Activated CD8-positive, alpha-beta T cell treated with anti-CD3 and anti-CD28 coated beads for 36 hours (primary cell): ENCODE measurements at regions of chr9 and their contacts with region 1.

Region 1: GRCh38 chr9:131270171-131271015 is 5.9 kb downstream of the FAM78A start:
- DNase-seq: peak; percentile 77
- ATAC-seq: peak; percentile 18
- H3K4me3 Mint-ChIP-seq: peak overlapping the region; percentile 90
- H3K27ac Mint-ChIP-seq: peak overlapping the region; percentile 99
- H3K4me1 Mint-ChIP-seq: peaks cover 44% of the 10 kb centered on the region
- H3K27me3 Mint-ChIP-seq: no peaks in the 10 kb centered on the region
- CTCF ChIP-seq: no peak

Region 2: DNA sequence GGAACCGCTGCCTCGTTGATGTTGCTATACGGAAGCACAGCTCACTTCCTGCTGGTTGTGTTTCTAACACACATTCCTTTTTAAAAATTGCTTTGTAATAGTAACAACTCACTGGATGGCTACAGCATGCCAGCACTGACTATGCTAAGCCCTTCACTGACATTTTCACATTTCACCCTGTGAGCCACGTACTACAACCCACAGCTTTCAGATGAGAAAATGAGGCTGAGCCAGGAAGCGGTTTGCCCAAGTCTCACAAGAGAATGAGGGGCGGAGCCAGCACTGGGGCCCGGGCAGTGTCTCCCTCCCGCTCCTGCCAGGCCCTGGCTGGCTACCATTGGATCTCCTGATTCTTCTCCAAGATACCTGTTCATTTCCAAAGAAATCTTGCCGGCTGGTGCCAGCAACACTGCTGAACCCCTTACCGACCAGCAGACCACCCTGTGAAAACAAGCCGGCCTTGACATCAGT is 32.4 kb before region 1 on chr9:
- CTCF ChIA-PET with region 1: no interaction called
- POLR2A ChIA-PET with region 1: interaction called, 33 read pairs
- intact Hi-C with region 1: loop called (anchors 5 kb)
- DNase-seq: peak; percentile 96
- ATAC-seq: peak; percentile 95
- H3K4me3 Mint-ChIP-seq: peak overlapping the region; percentile 73
- H3K27ac Mint-ChIP-seq: peak overlapping the region; percentile 98
- H3K4me1 Mint-ChIP-seq: peaks cover 39% of the 10 kb centered on the region
- H3K27me3 Mint-ChIP-seq: no peaks in the 10 kb centered on the region
- CTCF ChIP-seq: no peak